K562 (cell line): ENCODE measurements at regions of chr11 and their contacts with region 1.

Region 1: GRCh38 chr11:72598906-72599305 is 75.3 kb downstream of the PDE2A start:
- DNase-seq: peak; percentile 54 to 70 (median 60)
- ATAC-seq: peak; percentile 89
- H3K4me3 ChIP-seq: no peak overlapping the region
- H3K27ac ChIP-seq: no peak overlapping the region
- H3K4me1 ChIP-seq: no peaks in the 10 kb centered on the region
- H3K27me3 ChIP-seq: peaks cover 13 to 68% of the 10 kb centered on the region in 2 experiments; a peak in 4 of 5 replicates
- CTCF ChIP-seq: peak; percentile 62 to 70 (median 68)
- EP300 ChIP-seq: no peak
- POLR2A ChIP-seq: no peak
- RAD21 ChIP-seq: peak; percentile 41 to 76

Region 2: DNA sequence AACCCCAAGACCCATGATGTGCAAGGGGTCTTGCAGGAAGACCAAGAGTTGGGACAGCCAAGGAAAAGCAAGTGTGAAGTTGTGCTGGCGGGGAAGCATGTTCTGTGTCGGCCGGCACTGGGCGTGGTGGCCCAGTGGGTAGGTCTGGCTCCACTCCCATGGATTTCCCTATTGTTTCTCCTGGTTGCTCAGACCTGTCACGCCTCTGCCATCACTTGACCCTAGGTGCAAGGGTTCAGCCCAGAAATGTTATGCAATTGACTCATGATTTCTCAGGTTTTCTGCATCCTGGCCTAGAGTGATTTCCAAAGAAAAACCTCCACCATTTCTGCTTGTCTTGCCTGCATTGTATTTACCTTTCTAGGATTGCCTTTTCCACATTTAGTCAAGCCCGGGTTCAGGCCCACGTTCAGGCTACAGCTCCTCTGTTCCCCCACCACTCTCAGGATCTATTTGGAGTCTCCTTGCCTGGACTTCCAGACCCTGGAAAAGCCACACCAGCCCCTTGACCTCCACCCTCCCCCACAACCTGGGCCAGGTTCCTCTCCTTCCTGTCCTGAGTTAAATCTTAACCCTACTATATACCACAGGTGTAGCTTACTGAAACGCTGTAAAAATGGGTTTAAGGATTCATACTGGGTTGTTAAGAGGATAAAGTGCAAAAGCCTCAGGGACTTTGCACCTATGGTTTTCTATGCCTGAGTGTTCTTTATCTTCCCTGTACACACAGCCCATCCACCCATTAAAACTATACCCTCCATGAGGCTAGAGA is 424.4 kb before region 1 on chr11:
- CTCF ChIA-PET with region 1: no interaction called
- POLR2A ChIA-PET with region 1: no interaction called
- in situ Hi-C with region 1: no loop called
- intact Hi-C with region 1: no loop called
- DNase-seq: no peak
- ATAC-seq: no peak
- H3K4me3 ChIP-seq: no peak overlapping the region
- H3K27ac ChIP-seq: no peak overlapping the region
- H3K4me1 ChIP-seq: no peaks in the 10 kb centered on the region; a peak in 1 of 5 replicates
- H3K27me3 ChIP-seq: peaks cover 10 to 29% of the 10 kb centered on the region in 2 experiments; a peak in 3 of 5 replicates
- CTCF ChIP-seq: no peak
- EP300 ChIP-seq: no peak
- POLR2A ChIP-seq: no peak
- RAD21 ChIP-seq: no peak

Region 3: DNA sequence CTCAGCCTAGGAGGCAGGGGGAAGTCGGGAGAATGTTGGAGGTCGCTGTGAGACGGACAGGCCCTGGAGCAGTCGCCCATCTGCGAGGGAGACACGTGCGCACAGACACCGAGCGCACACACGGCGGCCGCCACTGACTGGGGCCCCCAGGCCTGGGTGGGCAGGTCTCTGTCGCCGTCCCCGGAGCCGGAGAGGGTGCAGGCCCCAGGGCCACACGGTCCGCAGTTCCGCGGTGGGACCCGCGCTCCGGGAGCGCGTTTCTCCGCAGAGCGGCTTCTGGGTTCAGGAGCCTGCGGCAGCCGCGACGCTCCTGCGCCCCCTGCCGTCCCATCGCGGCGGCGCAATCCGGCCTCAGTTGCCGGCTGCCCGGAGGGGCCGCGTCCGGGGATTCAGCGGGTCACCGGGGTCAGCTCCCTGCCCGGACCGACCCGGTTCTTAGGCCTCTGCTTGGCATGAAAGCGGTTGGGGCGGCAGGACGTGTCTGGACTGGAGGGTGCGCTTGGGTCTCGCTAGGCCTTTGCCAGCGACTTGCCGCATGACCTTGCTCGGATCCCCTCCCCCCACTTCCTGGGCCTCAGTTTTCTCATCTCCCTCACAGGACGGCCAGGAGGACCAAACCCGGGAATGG is 44.1 kb after region 1 on chr11:
- CTCF ChIA-PET with region 1: interaction called, 8 read pairs
- POLR2A ChIA-PET with region 1: no interaction called
- in situ Hi-C with region 1: loop called (anchors 5 kb)
- intact Hi-C with region 1: loop called (anchors 2 kb)
- DNase-seq: peak; percentile 79 to 85 (median 83)
- ATAC-seq: peak; percentile 92
- H3K4me3 ChIP-seq: peak overlapping the region; percentile 38
- H3K27ac ChIP-seq: no peak overlapping the region; the same call in 2 of the 3 replicates
- H3K4me1 ChIP-seq: peaks cover 0 to 20% of the 10 kb centered on the region in 2 experiments; a peak in 3 of 5 replicates
- H3K27me3 ChIP-seq: peaks cover 29 to 41% of the 10 kb centered on the region in 2 experiments
- CTCF ChIP-seq: peak; percentile 87 to 95 (median 89)
- EP300 ChIP-seq: no peak
- POLR2A ChIP-seq: no peak
- RAD21 ChIP-seq: peak; percentile 85 to 96

Region 4: GRCh38 chr11:72648384-72649136 is 49.7 kb after region 1 on chr11:
- CTCF ChIA-PET with region 1: interaction called, 8 read pairs
- POLR2A ChIA-PET with region 1: no interaction called
- in situ Hi-C with region 1: loop called (anchors 5 kb)
- intact Hi-C with region 1: loop called (anchors 2 kb)
- DNase-seq: no peak
- ATAC-seq: no peak
- H3K4me3 ChIP-seq: no peak overlapping the region
- H3K27ac ChIP-seq: no peak overlapping the region
- H3K4me1 ChIP-seq: peaks cover 12 to 13% of the 10 kb centered on the region in 2 experiments; a peak in 4 of 5 replicates
- H3K27me3 ChIP-seq: peaks cover 0 to 9% of the 10 kb centered on the region in 2 experiments; a peak in 1 of 5 replicates
- CTCF ChIP-seq: no peak
- EP300 ChIP-seq: no peak
- POLR2A ChIP-seq: no peak
- RAD21 ChIP-seq: no peak